ENCODE measurements at regions of chr12 and their contacts with region 1.

Region 1: DNA sequence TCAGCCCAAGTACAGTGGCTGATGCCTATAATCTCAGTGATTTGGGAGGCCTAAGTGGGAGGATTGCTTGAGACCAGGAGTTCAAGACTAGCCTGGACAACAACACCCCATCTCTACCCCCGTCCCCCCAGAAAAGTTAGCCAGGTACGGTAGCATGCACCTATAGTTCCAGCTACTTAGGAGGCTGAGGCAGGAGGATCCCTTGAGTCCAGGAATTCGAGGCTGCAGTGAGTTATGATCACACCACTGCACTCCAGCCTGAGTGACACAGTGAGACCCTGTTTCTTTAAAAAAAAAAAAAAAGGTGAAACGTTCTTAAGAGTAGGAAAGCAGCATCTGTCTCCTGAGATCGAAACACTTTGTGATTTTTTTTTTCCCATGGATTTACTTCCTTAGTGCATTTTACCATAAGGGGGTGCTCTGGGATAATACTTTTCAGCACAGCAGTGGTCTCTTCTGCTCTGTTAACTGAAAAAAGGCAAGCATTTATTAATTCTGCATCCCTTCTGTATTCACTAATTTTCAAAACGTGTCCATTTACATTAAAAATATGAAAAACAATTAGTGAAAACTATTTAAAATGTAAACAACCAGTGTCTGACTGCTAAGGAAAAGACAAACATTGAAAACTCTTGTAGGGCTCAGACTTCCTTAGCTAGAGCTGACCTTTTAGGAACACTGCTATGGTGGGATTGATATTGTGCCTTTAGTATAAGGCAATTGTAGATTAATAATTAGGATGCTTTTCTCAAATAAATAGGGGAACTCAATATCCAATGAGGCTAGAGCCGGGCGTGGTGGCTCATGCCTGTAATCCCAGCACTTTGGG is 31.2 kb upstream of the USP44 start:
- DNase-seq: no peak
- ATAC-seq: peak; percentile 44 to 80 (median 59)
- H3K4me3 ChIP-seq: no peak overlapping the region
- H3K27ac ChIP-seq: no peak overlapping the region
- H3K4me1 ChIP-seq: no peaks in the 10 kb centered on the region
- H3K27me3 ChIP-seq: no peaks in the 10 kb centered on the region
- CTCF ChIP-seq: peak; percentile 35 to 81 (median 73)
- POLR2A ChIP-seq: no peak

Region 2: GRCh38 chr12:95615749-95616148 is 33.3 kb after region 1 on chr12:
- intact Hi-C with region 1: loop called in 1 of 10 experiments (anchors 2 kb)
- DNase-seq: no peak
- ATAC-seq: peak in 2 of 4 donors; percentile 38 to 58
- H3K4me3 ChIP-seq: no peak overlapping the region
- H3K27ac ChIP-seq: peak overlapping the region in 8 of 12 donors; percentile 1 to 65 (median 50)
- H3K4me1 ChIP-seq: peaks cover 0 to 29% (median 13%) of the 10 kb centered on the region in 12 donors
- H3K27me3 ChIP-seq: no peaks in the 10 kb centered on the region
- CTCF ChIP-seq: no peak
- POLR2A ChIP-seq: no peak

Region 3: DNA sequence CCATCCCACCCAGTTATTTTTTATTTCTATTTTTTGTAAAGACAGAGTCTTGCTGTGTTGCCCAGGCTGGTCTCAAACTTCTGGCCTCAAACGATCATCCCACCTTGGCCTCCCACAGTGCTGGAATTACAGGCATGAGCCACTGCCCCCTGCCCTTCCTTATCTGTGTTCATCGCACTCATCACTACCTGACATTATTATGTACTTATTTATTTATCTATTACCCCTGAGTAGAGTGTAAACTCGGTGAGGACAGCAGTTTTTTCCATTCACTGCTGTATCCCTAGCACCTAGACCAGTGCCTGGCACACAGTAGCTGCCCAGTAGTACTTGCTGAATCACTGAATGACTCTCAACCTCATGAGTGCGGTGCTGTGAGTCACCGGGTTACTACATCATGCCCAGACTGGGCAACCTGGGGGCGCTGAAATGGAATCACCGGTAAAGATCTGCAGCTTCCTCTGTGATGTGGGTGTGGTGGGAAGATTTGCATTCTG is 50.7 kb after region 1 on chr12:
- intact Hi-C with region 1: no loop called
- DNase-seq: peak in 2 of 5 donors; percentile 38 to 53
- ATAC-seq: peak in 3 of 4 donors; percentile 36 to 65 (median 54)
- H3K4me3 ChIP-seq: no peak overlapping the region
- H3K27ac ChIP-seq: peak overlapping the region; percentile 1 to 68 (median 37)
- H3K4me1 ChIP-seq: peaks cover 0 to 48% (median 15%) of the 10 kb centered on the region in 12 donors
- H3K27me3 ChIP-seq: no peaks in the 10 kb centered on the region
- CTCF ChIP-seq: no peak
- POLR2A ChIP-seq: no peak

Region 4: DNA sequence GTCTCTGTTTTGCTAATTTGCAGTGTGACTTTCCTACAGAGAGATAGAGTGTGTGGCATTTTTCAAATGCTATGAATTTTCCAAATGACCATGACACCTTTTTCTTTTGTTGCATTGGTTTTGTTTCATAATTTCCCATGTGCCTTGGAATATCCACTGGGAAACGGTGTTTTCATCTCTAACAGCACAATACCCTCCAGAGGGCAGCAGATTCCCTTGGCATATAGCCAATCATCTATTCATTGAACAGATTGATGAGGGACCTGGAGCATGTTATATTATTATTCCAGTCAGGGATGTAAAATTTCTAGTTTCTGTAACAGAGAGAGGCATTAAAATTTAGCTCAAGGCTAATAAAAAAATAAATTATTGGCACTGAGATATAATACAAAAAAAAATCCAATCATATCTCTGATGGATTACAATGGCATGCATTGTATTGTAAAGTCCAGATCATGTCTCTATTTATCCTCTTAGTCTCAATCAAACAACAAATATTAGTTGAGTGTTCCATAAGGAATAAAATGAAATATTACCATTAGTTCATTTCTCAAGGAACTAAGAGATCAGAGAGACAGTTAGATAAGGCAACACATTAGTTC is 237.8 kb after region 1 on chr12:
- intact Hi-C with region 1: loop called (anchors 1 to 2 kb)
- DNase-seq: no peak
- ATAC-seq: peak in 1 of 4 donors; percentile 52
- H3K4me3 ChIP-seq: no peak overlapping the region
- H3K27ac ChIP-seq: no peak overlapping the region
- H3K4me1 ChIP-seq: no peaks in the 10 kb centered on the region
- H3K27me3 ChIP-seq: no peaks in the 10 kb centered on the region
- CTCF ChIP-seq: peak; percentile 23 to 70 (median 48)
- POLR2A ChIP-seq: no peak

Measured in heart left ventricle (tissue), 16 donors.